ENCODE measurements at regions of chr12 and their contacts with region 1.

Region 1: GRCh38 chr12:112386726-112387125 is 4.5 kb upstream of the HECTD4 start:
- DNase-seq: no peak
- H3K27ac ChIP-seq: no peak overlapping the region
- CTCF ChIP-seq: no peak

Region 2: GRCh38 chr12:112198120-112198733 is 188.5 kb before region 1 on chr12:
- CTCF ChIA-PET with region 1: interaction called, 23 read pairs
- POLR2A ChIA-PET with region 1: no interaction called
- DNase-seq: peak; percentile 63
- H3K27ac ChIP-seq: no peak overlapping the region
- CTCF ChIP-seq: peak; percentile 51

Region 3: GRCh38 chr12:112266473-112266872 is 120.3 kb before region 1 on chr12:
- CTCF ChIA-PET with region 1: interaction called, 10 read pairs
- POLR2A ChIA-PET with region 1: no interaction called
- DNase-seq: no peak
- H3K27ac ChIP-seq: no peak overlapping the region
- CTCF ChIP-seq: no peak